CD4-positive, alpha-beta T cell (primary cell): ENCODE measurements at regions of chr20 and their contacts with region 1.

Region 1: GRCh38 chr20:12358006-12358656 is 440.4 kb downstream of the BTBD3 start:
- DNase-seq: no peak
- ATAC-seq: no peak
- H3K4me3 ChIP-seq: no peak overlapping the region
- H3K4me3 Mint-ChIP-seq: no peak overlapping the region
- H3K27ac ChIP-seq: no peak overlapping the region
- H3K27ac Mint-ChIP-seq: no peak overlapping the region
- H3K4me1 ChIP-seq: no peaks in the 10 kb centered on the region
- H3K4me1 Mint-ChIP-seq: no peaks in the 10 kb centered on the region
- H3K27me3 ChIP-seq: no peaks in the 10 kb centered on the region
- H3K27me3 Mint-ChIP-seq: no peaks in the 10 kb centered on the region
- CTCF ChIP-seq: no peak

Region 2: GRCh38 chr20:12256806-12257205 is 101.3 kb before region 1 on chr20:
- CTCF ChIA-PET with region 1: no interaction called
- POLR2A ChIA-PET with region 1: no interaction called
- intact Hi-C with region 1: no loop called
- DNase-seq: no peak
- ATAC-seq: no peak
- H3K4me3 ChIP-seq: no peak overlapping the region
- H3K4me3 Mint-ChIP-seq: no peak overlapping the region
- H3K27ac ChIP-seq: no peak overlapping the region
- H3K27ac Mint-ChIP-seq: no peak overlapping the region
- H3K4me1 ChIP-seq: no peaks in the 10 kb centered on the region
- H3K4me1 Mint-ChIP-seq: no peaks in the 10 kb centered on the region
- H3K27me3 ChIP-seq: no peaks in the 10 kb centered on the region
- H3K27me3 Mint-ChIP-seq: no peaks in the 10 kb centered on the region
- CTCF ChIP-seq: no peak

Region 3: DNA sequence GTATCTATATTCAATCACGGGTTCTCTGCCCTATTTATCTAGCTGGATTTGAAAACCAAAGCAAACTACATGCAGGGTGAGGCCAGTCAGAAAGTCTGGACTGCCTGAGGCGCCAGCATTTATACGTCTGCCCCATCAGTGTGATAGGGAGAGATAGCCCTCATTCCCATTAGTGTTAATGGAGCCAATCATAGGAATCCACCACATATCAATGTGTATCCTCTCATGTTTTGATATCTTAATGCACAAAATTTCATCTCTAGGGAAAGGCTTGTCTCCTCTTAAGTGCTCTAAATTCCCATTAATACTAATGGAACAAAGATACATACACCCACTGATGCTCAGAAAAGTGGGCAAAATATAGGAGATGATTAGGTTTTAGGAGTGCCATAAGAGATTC is 64.2 kb before region 1 on chr20:
- CTCF ChIA-PET with region 1: no interaction called
- POLR2A ChIA-PET with region 1: no interaction called
- intact Hi-C with region 1: loop called in 1 of 2 experiments (anchors 10 kb)
- DNase-seq: no peak
- ATAC-seq: no peak
- H3K4me3 ChIP-seq: no peak overlapping the region
- H3K4me3 Mint-ChIP-seq: no peak overlapping the region
- H3K27ac ChIP-seq: no peak overlapping the region
- H3K27ac Mint-ChIP-seq: no peak overlapping the region
- H3K4me1 ChIP-seq: no peaks in the 10 kb centered on the region
- H3K4me1 Mint-ChIP-seq: no peaks in the 10 kb centered on the region
- H3K27me3 ChIP-seq: no peaks in the 10 kb centered on the region
- H3K27me3 Mint-ChIP-seq: no peaks in the 10 kb centered on the region
- CTCF ChIP-seq: no peak

Region 4: GRCh38 chr20:12337607-12338006 is 20.5 kb before region 1 on chr20:
- CTCF ChIA-PET with region 1: no interaction called
- POLR2A ChIA-PET with region 1: no interaction called
- intact Hi-C with region 1: no loop called
- DNase-seq: no peak
- ATAC-seq: no peak
- H3K4me3 ChIP-seq: no peak overlapping the region
- H3K4me3 Mint-ChIP-seq: no peak overlapping the region
- H3K27ac ChIP-seq: no peak overlapping the region
- H3K27ac Mint-ChIP-seq: no peak overlapping the region
- H3K4me1 ChIP-seq: no peaks in the 10 kb centered on the region
- H3K4me1 Mint-ChIP-seq: no peaks in the 10 kb centered on the region
- H3K27me3 ChIP-seq: no peaks in the 10 kb centered on the region
- H3K27me3 Mint-ChIP-seq: no peaks in the 10 kb centered on the region
- CTCF ChIP-seq: no peak

Region 5: DNA sequence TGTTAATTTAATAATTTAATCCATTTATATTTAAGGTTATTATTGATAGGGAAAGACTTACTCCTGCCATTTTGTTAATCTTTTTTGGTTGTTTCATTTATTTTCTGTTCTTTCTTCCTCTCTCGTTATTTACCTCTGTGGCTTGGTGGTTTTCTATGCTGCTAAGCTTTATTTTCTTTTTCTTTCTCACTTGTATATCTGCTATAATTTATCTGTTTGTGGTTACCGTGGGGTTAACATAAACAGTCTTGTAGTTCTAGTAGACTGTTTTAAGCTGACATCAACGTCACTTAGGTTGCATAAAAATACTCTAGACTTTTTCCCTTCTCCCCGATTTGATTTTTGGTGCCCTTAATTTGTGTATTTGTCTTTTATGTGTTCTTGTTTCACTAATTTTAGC is 269.4 kb after region 1 on chr20:
- CTCF ChIA-PET with region 1: no interaction called
- POLR2A ChIA-PET with region 1: no interaction called
- intact Hi-C with region 1: no loop called
- DNase-seq: no peak
- ATAC-seq: no peak
- H3K4me3 ChIP-seq: no peak overlapping the region
- H3K4me3 Mint-ChIP-seq: no peak overlapping the region
- H3K27ac ChIP-seq: no peak overlapping the region
- H3K27ac Mint-ChIP-seq: no peak overlapping the region
- H3K4me1 ChIP-seq: no peaks in the 10 kb centered on the region
- H3K4me1 Mint-ChIP-seq: no peaks in the 10 kb centered on the region
- H3K27me3 ChIP-seq: no peaks in the 10 kb centered on the region
- H3K27me3 Mint-ChIP-seq: no peaks in the 10 kb centered on the region
- CTCF ChIP-seq: no peak